ENCODE measurements at regions of chr6 and their contacts with region 1.

Region 1: GRCh38 chr6:27251606-27252251 is 4.2 kb downstream of the PRSS16 start:
- DNase-seq: peak; percentile 93
- H3K4me3 ChIP-seq: peak overlapping the region; percentile 57 to 90 (median 70)
- H3K27ac ChIP-seq: no peak overlapping the region
- H3K4me1 ChIP-seq: peaks cover 4% of the 10 kb centered on the region
- H3K27me3 ChIP-seq: no peaks in the 10 kb centered on the region
- CTCF ChIP-seq: peak; percentile 27 to 65

Region 2: DNA sequence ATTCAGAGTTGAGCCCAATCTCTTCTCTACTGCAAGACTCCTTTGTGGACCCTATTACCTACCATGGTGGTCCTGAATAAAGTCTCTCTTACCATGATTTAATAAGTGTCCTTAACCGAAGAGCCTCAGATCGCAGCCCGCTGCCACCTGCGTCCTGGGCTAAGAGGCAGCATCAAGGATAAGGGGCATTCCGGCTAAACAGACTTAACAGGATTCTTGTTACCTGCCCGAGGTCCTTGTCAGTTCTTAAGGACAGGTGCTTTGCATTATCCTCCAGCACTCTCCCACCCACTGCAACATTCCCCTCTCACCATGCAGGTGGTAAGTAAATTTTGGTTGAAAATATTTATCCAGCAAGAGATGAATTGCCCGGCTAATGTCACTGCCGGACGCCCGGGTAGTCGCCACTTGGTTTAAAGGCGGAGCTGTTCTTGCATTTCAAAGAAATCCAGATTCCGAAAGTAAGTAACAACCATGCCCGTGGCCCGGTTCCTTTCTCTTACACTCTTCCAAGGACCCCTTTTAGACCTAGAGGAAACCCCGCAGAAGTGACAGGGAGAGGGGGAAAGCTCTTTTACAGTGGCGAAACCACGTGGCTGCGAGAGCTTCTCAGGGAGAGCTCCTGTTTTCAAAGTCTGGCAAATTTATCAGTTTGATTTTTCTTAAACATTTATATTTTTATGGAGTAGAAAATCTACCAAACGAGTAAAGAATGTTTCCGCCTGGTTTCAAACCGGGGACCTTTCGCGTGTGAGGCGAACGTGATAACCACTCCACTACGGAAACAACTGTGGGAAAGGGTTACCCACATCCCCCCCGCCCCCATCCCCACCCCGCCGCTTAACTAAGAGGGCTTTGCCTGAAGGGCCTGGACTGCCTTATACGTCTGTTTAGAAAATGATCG is 46.1 kb before region 1 on chr6:
- CTCF ChIA-PET with region 1: no interaction called
- dilution Hi-C with region 1: no loop called
- in situ Hi-C with region 1: no loop called
- intact Hi-C with region 1: no loop called
- DNase-seq: no peak
- H3K4me3 ChIP-seq: no peak overlapping the region
- H3K27ac ChIP-seq: no peak overlapping the region
- H3K4me1 ChIP-seq: no peaks in the 10 kb centered on the region
- H3K27me3 ChIP-seq: no peaks in the 10 kb centered on the region
- CTCF ChIP-seq: no peak

Region 3: DNA sequence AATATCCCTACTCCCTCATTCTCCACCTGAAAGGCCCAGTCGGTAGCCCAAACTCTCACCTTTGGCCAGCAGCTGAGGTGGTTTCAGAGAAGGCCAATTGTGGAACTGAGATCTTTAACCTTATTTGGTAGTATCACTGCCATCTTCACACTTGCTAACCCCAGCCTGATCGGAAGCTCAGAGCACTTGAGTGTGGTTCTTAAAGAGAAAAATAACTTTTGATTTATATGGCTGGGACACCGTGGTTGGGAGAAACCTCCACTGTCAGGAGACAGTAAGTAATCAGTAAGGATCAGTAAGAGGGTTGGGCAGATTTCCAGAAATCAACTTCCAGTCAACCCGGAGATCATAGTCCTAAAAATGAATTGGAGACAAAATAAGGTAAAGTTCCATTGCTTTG is 27.0 kb before region 1 on chr6:
- CTCF ChIA-PET with region 1: interaction called, 17 read pairs
- dilution Hi-C with region 1: no loop called
- in situ Hi-C with region 1: no loop called
- intact Hi-C with region 1: no loop called
- DNase-seq: no peak
- H3K4me3 ChIP-seq: no peak overlapping the region
- H3K27ac ChIP-seq: no peak overlapping the region
- H3K4me1 ChIP-seq: no peaks in the 10 kb centered on the region
- H3K27me3 ChIP-seq: peaks cover 2% of the 10 kb centered on the region
- CTCF ChIP-seq: no peak

Region 4: DNA sequence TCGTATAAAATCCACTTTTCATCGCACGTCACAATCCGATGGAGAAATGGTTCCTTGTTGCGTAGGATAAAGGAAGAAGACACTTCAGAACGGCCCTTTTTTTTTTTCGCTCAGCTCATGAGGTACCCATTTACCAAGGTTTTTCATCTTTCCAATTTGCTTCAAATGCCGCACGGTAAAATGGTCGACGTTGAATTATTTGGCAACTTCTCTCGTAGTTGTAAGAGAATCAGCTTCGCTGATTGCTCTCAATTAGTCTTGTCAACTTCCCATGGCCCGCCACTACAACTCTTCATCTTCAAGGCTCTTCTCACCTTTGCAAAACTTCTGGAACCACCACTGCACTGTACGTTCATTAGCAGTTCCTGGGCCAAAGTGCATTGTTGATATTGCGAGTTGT is 31.6 kb after region 1 on chr6:
- CTCF ChIA-PET with region 1: no interaction called
- dilution Hi-C with region 1: no loop called
- in situ Hi-C with region 1: no loop called
- intact Hi-C with region 1: no loop called
- DNase-seq: no peak
- H3K4me3 ChIP-seq: no peak overlapping the region
- H3K27ac ChIP-seq: no peak overlapping the region
- H3K4me1 ChIP-seq: peaks cover 15% of the 10 kb centered on the region
- H3K27me3 ChIP-seq: no peaks in the 10 kb centered on the region
- CTCF ChIP-seq: no peak

Region 5: GRCh38 chr6:27295301-27296081 is 43.8 kb after region 1 on chr6:
- CTCF ChIA-PET with region 1: no interaction called
- dilution Hi-C with region 1: no loop called
- in situ Hi-C with region 1: no loop called
- intact Hi-C with region 1: loop called (anchors 2 kb)
- DNase-seq: peak; percentile 82
- H3K4me3 ChIP-seq: peak overlapping the region; percentile 54 to 77 (median 63)
- H3K27ac ChIP-seq: no peak overlapping the region
- H3K4me1 ChIP-seq: peaks cover 4% of the 10 kb centered on the region
- H3K27me3 ChIP-seq: no peaks in the 10 kb centered on the region
- CTCF ChIP-seq: no peak

Region 6: DNA sequence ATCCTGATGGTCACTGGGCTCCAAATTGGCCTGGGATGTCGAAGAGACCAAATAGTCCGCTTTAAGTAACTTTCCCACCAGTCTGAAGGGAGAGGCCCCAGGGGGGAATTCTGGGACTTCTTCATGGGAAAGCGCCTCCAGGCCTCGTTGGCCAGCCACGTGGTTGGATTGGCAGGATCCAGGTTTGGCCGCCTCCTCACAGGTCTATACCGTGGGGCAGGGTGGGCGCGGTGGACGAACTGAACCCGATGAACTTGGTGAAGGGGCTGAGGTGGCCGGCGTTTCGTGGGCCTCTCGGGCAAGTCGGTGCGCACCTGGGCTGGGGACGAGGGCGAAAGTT is 60.0 kb after region 1 on chr6:
- CTCF ChIA-PET with region 1: no interaction called
- dilution Hi-C with region 1: no loop called
- in situ Hi-C with region 1: no loop called
- intact Hi-C with region 1: no loop called
- DNase-seq: no peak
- H3K4me3 ChIP-seq: peak overlapping the region; percentile 60 to 90 (median 65)
- H3K27ac ChIP-seq: no peak overlapping the region
- H3K4me1 ChIP-seq: peaks cover 13% of the 10 kb centered on the region
- H3K27me3 ChIP-seq: no peaks in the 10 kb centered on the region
- CTCF ChIP-seq: no peak

Region 7: DNA sequence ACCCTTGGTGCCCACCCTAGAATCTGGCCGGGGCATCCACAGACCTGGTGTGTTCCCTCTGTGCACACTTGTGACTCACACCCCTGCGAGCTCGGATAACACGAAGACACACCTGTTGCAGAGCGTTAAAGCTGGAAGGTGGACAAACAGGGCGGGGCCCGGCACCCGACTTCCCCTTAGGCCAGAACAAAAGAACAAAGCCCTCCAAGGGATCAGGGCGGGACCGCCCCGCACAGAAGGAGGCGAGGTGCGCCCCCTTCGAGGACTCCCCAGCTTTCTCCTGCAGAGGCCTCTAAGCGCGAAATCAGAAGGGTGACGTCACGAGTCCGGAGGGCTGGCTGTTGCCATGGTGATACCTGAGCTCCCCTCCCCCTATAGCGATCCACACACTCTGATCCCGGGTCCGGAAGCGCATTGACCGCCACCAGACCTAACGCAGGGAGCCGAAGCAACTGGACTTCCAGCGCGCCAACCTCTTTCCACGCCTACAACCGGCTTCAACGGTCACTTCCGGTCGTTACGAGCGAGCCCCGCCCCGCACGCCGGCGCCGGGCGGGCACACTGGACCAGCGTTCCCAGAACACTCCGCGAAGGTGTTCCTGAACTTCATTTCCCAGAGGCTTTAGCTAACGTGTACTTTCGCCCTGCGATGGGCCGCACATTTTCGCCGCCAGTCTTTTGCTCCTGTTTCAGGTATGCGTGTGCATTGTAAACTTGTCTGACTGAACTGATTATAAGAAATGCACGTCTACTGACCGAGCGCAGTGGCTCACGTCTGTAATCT is 221.1 kb after region 1 on chr6 and contains the start of gene ZNF184:
- CTCF ChIA-PET with region 1: no interaction called
- dilution Hi-C with region 1: no loop called
- in situ Hi-C with region 1: no loop called
- intact Hi-C with region 1: loop called (anchors 10 kb)
- DNase-seq: peak; percentile 99
- H3K4me3 ChIP-seq: peak within 1 kb of the TSS; percentile 59 to 79 (median 63)
- H3K27ac ChIP-seq: peak within 1 kb of the TSS; percentile 86
- H3K4me1 ChIP-seq: peaks cover 6% of the 10 kb centered on the region
- H3K27me3 ChIP-seq: no peaks in the 10 kb centered on the region
- CTCF ChIP-seq: no peak
- total RNA-seq, gene ZNF184: 3.4 to 7.2 TPM

Measured in mammary epithelial cell (primary cell).